ENCODE measurements at regions of chr6 and their contacts with region 1.

Region 1: DNA sequence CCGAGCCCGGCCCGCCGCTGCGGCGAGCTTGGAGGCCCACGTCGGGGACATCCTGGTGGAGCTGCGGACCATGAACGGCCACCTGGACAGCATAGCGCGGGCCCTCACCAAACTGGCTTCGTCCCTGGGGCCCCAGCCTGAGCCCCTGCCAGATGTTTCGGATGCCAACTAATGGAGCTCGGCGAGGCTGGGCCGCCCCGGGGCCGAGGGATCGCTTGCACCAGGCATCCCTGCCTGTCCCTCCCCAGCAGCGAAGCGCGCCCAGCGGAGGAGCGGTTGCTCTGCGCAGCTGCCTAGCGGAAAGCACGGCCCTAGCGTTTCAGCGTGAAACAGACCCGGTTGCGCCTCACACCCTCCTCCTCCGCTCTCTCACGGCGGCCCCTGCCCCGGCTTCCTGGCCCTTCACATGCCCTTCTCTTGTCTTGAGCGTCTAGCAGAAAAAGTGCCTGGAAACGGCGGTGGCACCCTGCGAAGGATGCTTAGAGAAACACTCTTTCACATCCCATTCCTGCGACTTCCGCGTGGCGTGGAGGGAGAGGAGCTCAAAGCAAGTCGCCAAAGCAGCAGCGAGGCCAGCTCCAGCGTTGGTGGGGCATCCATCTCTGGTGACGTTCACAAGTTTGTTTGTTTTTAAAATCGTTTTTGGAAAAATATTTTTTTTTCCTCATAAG is 286.0 kb upstream of the SUPT3H start:
- DNase-seq: peak; percentile 42
- H3K4me3 ChIP-seq: peak overlapping the region; percentile 22 to 34 (median 30)
- H3K27ac ChIP-seq: no peak overlapping the region
- H3K4me1 ChIP-seq: peaks cover 8% of the 10 kb centered on the region
- H3K27me3 ChIP-seq: peaks cover 9 to 12% of the 10 kb centered on the region in 2 experiments
- CTCF ChIP-seq: peak in 1 of 2 donors; percentile 22
- POLR2A ChIP-seq: no peak

Region 2: GRCh38 chr6:45677381-45678284 is 13.9 kb after region 1 on chr6:
- CTCF ChIA-PET with region 1: interaction called, 4 read pairs
- POLR2A ChIA-PET with region 1: no interaction called
- dilution Hi-C with region 1: no loop called
- intact Hi-C with region 1: loop called (anchors 2 kb)
- DNase-seq: peak; percentile 90
- H3K4me3 ChIP-seq: peak overlapping the region in 1 of 3 experiments; percentile 16
- H3K27ac ChIP-seq: peak overlapping the region; percentile 87
- H3K4me1 ChIP-seq: peaks cover 15% of the 10 kb centered on the region
- H3K27me3 ChIP-seq: no peaks in the 10 kb centered on the region
- CTCF ChIP-seq: no peak
- POLR2A ChIP-seq: peak; percentile 42